GM10248 (cell line): ENCODE measurements at regions of chr1 and their contacts with region 1.

Region 1: GRCh38 chr1:226100436-226101391 is 38.2 kb downstream of the H3-3A start:
- DNase-seq: peak; percentile 60
- CTCF ChIP-seq: no peak

Region 2: DNA sequence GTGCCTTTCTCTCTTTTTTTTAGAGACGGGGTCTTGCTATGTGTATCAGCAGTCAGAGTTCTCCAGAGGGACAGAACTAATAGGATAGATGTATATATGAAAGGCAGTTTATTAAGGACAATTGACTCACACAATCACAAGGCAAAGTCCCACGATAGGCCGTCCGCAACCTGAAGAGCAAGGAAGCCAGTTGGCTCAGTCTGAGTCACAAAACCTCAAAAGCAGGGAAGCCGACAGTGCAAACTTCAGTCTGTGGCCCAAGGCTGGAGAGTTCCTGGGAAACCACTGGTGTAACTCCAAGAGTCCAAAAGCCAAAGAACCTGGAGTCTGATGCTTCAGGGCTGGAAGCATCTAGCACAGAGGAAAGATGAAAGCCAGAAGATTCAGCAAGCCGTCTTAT is 54.5 kb before region 1 on chr1:
- CTCF ChIA-PET with region 1: no interaction called
- POLR2A ChIA-PET with region 1: no interaction called
- DNase-seq: no peak
- CTCF ChIP-seq: no peak

Region 3: DNA sequence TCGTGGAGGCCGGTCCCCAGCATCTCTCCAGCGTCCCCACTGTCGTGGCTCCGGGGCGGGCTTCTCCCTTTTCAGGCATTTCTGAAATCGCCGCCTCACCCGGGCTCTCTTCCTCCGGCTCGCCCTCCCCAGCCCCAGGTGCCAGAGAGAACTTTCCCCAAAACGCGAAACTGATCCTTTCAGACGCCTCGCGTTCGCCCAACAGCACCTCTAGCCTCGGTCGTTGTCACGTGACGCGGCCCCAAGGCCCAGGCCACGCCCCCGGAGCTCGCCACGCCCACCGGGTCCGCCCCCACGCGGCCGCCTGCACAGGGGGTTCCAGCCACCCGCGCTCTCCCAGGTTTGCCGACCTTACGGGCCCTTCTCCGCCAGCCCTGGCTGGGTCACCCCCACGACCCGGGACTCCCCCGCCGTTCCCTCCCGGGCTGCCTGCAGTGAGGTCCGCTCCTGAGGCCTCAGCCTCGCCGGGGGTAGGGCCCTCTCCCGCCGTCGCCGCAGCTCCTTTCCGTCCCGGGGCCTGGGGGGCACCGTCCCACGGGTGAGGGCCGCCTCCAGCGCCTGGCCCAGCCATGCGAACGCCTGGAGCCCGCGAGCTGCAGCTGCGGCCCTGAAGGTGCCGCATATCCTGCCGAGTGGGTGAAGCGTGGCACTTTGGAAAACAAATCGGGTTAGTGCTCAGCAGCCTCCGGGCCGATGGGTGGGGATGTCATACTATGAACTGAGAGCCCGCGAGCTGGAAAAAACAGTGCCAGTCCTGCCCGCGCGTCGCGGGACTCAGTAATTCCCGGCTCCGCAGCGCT is 17.2 kb before region 1 on chr1:
- CTCF ChIA-PET with region 1: interaction called, 10 read pairs
- POLR2A ChIA-PET with region 1: interaction called, 3 read pairs
- DNase-seq: peak; percentile 97
- CTCF ChIP-seq: no peak

Region 4: GRCh38 chr1:226526801-226527595 is 426.3 kb after region 1 on chr1:
- CTCF ChIA-PET with region 1: no interaction called
- POLR2A ChIA-PET with region 1: no interaction called
- DNase-seq: no peak
- CTCF ChIP-seq: no peak